HAP-1 (cell line): ENCODE measurements at regions of chr1 and their contacts with region 1.

Region 1: GRCh38 chr1:110619412-110620249 is 13.5 kb upstream of the KCNA2 start:
- DNase-seq: peak; percentile 76 to 89
- H3K4me3 ChIP-seq: no peak overlapping the region; the same call in 1 of the 2 replicates
- H3K4me1 ChIP-seq: peaks cover 4% of the 10 kb centered on the region; the same call in 1 of the 2 replicates
- H3K27me3 ChIP-seq: peaks cover 34% of the 10 kb centered on the region

Region 2: GRCh38 chr1:110524311-110525251 is 95.0 kb before region 1 on chr1:
- in situ Hi-C with region 1: loop called (anchors 10 kb)
- DNase-seq: peak; percentile 63 to 74
- H3K4me3 ChIP-seq: no peak overlapping the region
- H3K4me1 ChIP-seq: no peaks in the 10 kb centered on the region
- H3K27me3 ChIP-seq: 0 out of 2 replicates have a peak, but pooled peaks cover 8% of the 10 kb centered on the region

Region 3: GRCh38 chr1:110736900-110737605 is 117.4 kb after region 1 on chr1:
- in situ Hi-C with region 1: no loop called
- DNase-seq: no peak
- H3K4me3 ChIP-seq: no peak overlapping the region
- H3K4me1 ChIP-seq: no peaks in the 10 kb centered on the region
- H3K27me3 ChIP-seq: no peaks in the 10 kb centered on the region

Region 4: DNA sequence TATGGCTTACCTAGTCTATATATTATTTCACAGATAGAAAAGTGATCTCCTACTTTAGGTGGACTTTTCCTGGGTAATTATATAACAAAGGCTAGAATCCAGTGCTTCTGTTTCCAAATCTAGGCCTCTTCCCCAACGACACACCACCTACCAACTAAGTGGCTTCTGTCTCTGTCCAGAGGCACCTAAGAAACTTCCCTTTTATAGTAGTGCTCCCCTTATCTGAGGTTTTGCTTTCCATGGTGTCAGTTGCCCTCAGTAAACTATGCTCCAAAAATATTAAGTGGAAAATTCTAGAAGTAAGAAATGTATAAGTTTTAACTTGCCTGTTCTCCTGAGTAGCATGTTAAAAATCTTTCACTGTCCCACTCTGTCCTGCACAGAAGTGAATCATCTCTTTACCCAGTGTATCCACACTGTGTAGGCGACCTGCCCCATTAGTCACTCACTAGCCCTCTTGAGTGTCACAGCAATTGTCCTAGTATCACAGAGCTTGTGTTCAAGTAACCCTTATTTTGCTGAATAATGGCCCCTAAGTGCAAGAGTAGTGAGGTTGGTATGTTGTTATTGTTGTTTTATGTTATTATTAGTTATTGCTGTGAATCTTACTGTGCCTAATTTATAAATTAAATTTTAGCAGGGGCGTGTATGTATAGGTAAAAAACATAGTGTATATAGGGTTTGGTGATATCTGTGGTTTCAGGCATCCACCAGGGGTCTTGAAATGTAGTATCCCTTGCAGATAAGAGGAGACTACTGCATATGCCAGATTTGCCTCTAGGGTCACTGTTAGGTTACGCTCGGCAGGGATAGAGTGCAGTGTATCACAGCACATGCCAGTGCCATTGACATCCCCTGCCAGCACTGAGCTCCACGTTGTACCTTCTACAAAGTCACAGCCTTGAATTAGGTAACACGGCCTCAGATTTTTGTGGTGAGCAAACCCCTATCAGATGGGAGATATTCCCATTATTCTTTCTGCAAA is 238.6 kb after region 1 on chr1:
- in situ Hi-C with region 1: no loop called
- DNase-seq: no peak
- H3K4me3 ChIP-seq: no peak overlapping the region
- H3K4me1 ChIP-seq: no peaks in the 10 kb centered on the region
- H3K27me3 ChIP-seq: no peaks in the 10 kb centered on the region